Naive thymus-derived CD4-positive, alpha-beta T cell (primary cell): ENCODE measurements at regions of chr6 and their contacts with region 1.

Region 1: DNA sequence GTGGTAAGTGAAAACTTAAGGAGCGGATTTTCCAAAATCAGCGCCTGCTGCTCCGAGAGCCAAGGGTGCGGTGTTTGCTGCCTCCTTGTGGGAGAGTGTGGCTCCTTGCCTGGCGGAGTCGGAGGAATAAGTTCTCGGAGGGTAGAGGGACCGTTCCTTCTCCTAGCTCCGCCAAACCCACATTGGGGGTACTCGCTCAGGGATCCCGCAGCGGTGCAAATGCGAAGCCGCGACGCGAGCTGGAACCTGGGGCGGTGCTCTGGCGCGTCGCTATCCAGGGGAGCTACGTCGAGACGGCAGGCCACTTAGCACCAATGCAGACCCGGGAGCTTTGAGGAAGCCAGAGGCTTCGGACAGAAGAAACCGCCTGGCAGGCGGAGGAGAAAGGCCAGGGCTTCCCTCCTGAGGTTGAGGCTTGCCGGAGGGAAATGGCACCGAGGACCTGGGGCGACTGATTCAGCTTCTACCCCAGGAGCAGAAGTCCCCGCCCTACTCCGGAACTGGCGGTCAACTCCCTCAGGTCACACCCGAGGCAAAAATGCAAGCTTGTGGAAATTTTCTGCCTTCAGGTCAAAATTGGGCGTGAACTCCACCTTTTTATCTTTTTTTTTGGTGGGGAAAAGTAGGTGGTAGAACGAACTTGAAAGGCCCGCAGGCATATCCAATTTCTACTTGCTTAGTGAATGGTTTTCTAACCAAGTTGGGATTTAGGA is 5.7 kb upstream of the DDX43 start:
- DNase-seq: peak in 7 of 9 donors; percentile 4 to 63 (median 13)
- ATAC-seq: peak; percentile 81
- H3K4me3 ChIP-seq: peak overlapping the region; percentile 73
- H3K4me3 Mint-ChIP-seq: peak overlapping the region; percentile 73 to 87 (median 81)
- H3K27ac ChIP-seq: no peak overlapping the region
- H3K27ac Mint-ChIP-seq: peak overlapping the region in 2 of 9 donors; percentile 14 to 85
- H3K4me1 ChIP-seq: peaks cover 0 to 7% of the 10 kb centered on the region in 2 donors
- H3K4me1 Mint-ChIP-seq: peaks cover 0 to 36% (median 5%) of the 10 kb centered on the region in 7 donors
- H3K27me3 ChIP-seq: no peaks in the 10 kb centered on the region
- H3K27me3 Mint-ChIP-seq: peaks cover 0 to 6% (median 5%) of the 10 kb centered on the region in 5 donors

Region 2: GRCh38 chr6:73262671-73263569 is 126.0 kb before region 1 on chr6 and contains the start of gene KHDC1:
- CTCF ChIA-PET with region 1: no interaction called
- POLR2A ChIA-PET with region 1: no interaction called
- intact Hi-C with region 1: no loop called
- DNase-seq: peak; percentile 24 to 67 (median 55)
- ATAC-seq: peak; percentile 87
- H3K4me3 ChIP-seq: peak within 1 kb of the TSS; percentile 88
- H3K4me3 Mint-ChIP-seq: peak within 1 kb of the TSS; percentile 76 to 92 (median 86)
- H3K27ac ChIP-seq: peak within 1 kb of the TSS; percentile 69
- H3K27ac Mint-ChIP-seq: peak within 1 kb of the TSS; percentile 64 to 89 (median 81)
- H3K4me1 ChIP-seq: peaks cover 12 to 15% of the 10 kb centered on the region in 2 donors
- H3K4me1 Mint-ChIP-seq: peaks cover 18 to 40% (median 35%) of the 10 kb centered on the region in 7 donors
- H3K27me3 ChIP-seq: no peaks in the 10 kb centered on the region
- H3K27me3 Mint-ChIP-seq: no peaks in the 10 kb centered on the region
- total RNA-seq, gene KHDC1: 0.46 to 3.7 (median 0.66) TPM

Region 3: DNA sequence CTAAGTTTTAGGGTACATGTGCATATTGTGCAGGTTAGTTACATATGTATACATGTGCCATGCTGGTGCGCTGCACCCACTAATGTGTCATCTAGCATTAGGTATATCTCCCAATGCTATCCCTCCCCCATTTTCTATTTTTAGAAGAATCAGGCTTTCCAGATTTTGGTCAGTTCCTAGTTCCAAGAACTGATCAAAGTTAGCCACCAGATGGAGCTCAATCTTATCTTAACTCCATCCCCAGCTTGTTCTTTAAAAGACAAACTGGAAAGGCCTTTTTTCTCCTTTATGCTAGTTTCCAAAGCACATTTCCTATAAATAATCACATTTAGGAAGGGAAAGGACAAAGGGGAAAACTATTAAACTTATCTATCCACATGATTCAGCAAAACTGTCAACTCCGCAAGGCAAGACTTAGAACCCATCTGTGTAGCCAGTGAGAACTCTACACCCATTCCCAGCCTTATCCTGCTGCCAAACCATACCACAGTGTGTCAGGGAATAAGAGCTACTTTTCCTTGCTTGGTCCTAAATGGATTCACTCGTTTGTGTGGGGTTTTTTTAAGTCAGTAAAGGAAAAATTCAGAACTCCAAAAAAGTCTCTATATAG is 103.2 kb before region 1 on chr6:
- CTCF ChIA-PET with region 1: no interaction called
- POLR2A ChIA-PET with region 1: no interaction called
- intact Hi-C with region 1: loop called in 1 of 2 experiments (anchors 10 kb)
- DNase-seq: no peak
- ATAC-seq: no peak
- H3K4me3 ChIP-seq: no peak overlapping the region
- H3K4me3 Mint-ChIP-seq: no peak overlapping the region
- H3K27ac ChIP-seq: no peak overlapping the region
- H3K27ac Mint-ChIP-seq: no peak overlapping the region
- H3K4me1 ChIP-seq: no peaks in the 10 kb centered on the region
- H3K4me1 Mint-ChIP-seq: peaks cover 0 to 4% (median 0%) of the 10 kb centered on the region in 7 donors
- H3K27me3 ChIP-seq: no peaks in the 10 kb centered on the region
- H3K27me3 Mint-ChIP-seq: no peaks in the 10 kb centered on the region

Region 4: GRCh38 chr6:73418081-73418741 is 29.3 kb after region 1 on chr6:
- CTCF ChIA-PET with region 1: no interaction called
- POLR2A ChIA-PET with region 1: no interaction called
- intact Hi-C with region 1: loop called in 1 of 2 experiments (anchors 2 kb)
- DNase-seq: no peak
- ATAC-seq: no peak
- H3K4me3 ChIP-seq: no peak overlapping the region
- H3K4me3 Mint-ChIP-seq: no peak overlapping the region
- H3K27ac ChIP-seq: no peak overlapping the region
- H3K27ac Mint-ChIP-seq: peak overlapping the region in 3 of 9 donors; percentile 4 to 89 (median 55)
- H3K4me1 ChIP-seq: peaks cover 10 to 18% of the 10 kb centered on the region in 2 donors
- H3K4me1 Mint-ChIP-seq: peaks cover 4 to 24% (median 14%) of the 10 kb centered on the region in 7 donors
- H3K27me3 ChIP-seq: no peaks in the 10 kb centered on the region
- H3K27me3 Mint-ChIP-seq: no peaks in the 10 kb centered on the region

Region 5: GRCh38 chr6:73523434-73524123 is 134.6 kb after region 1 on chr6:
- CTCF ChIA-PET with region 1: no interaction called
- POLR2A ChIA-PET with region 1: no interaction called
- intact Hi-C with region 1: no loop called
- DNase-seq: peak; percentile 61 to 81 (median 78)
- ATAC-seq: peak; percentile 22
- H3K4me3 ChIP-seq: peak overlapping the region; percentile 57
- H3K4me3 Mint-ChIP-seq: peak overlapping the region; percentile 89 to 95 (median 94)
- H3K27ac ChIP-seq: peak overlapping the region; percentile 98
- H3K27ac Mint-ChIP-seq: peak overlapping the region; percentile 94 to 99 (median 97)
- H3K4me1 ChIP-seq: peaks cover 24 to 25% of the 10 kb centered on the region in 2 donors
- H3K4me1 Mint-ChIP-seq: peaks cover 11 to 48% (median 37%) of the 10 kb centered on the region in 7 donors
- H3K27me3 ChIP-seq: no peaks in the 10 kb centered on the region
- H3K27me3 Mint-ChIP-seq: peaks cover 0 to 16% (median 0%) of the 10 kb centered on the region in 5 donors

Region 6: GRCh38 chr6:74199215-74199915 is 810.4 kb after region 1 on chr6:
- CTCF ChIA-PET with region 1: no interaction called
- POLR2A ChIA-PET with region 1: no interaction called
- intact Hi-C with region 1: no loop called
- DNase-seq: no peak
- ATAC-seq: no peak
- H3K4me3 ChIP-seq: no peak overlapping the region
- H3K4me3 Mint-ChIP-seq: no peak overlapping the region
- H3K27ac ChIP-seq: no peak overlapping the region
- H3K27ac Mint-ChIP-seq: no peak overlapping the region
- H3K4me1 ChIP-seq: no peaks in the 10 kb centered on the region
- H3K4me1 Mint-ChIP-seq: no peaks in the 10 kb centered on the region
- H3K27me3 ChIP-seq: no peaks in the 10 kb centered on the region
- H3K27me3 Mint-ChIP-seq: no peaks in the 10 kb centered on the region